Naive thymus-derived CD8-positive, alpha-beta T cell (primary cell): ENCODE measurements at regions of chr6 and their contacts with region 1.

Region 1: DNA sequence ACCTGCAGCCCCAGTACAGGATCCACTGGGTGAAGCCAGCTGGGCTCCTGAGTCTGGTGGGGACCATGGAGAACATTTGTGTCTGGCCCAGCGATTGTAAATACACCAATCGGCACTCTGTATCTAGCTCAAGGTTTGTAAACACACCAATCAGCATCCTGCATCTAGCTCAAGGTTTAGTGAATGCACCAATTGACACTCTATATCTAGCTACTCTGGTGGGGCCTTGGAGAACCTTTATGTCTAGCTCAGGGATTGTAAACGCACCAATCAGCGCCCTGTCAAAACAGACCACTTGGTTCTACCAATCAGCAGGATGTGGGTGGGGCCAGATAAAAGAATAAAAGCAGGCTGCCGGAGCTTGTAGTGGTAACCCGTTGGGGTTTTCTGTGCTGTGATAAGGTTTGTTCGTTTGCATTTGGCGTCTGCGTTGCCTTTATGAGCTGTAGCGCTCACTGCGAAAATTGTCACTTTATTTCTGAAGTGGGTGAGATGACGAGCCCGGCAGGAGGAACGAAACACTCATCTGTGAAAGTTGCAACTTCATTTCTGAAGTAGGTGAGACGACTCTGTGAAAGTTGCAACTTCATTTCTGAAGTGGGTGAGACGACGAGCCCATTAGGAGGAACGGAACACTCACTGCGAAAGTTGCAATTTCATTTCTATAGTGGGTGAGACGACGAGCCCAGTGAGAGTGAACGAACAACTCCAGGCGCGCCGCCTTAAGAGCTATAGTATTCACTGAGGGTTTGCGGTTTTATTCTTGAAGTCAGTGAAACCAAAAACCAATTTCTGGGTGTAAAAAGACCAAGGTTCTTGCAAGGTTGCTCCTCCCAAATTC is 31.1 kb downstream of the SERPINB6 start:
- DNase-seq: peak; percentile 31 to 90 (median 77)
- ATAC-seq: peak; percentile 67 to 68
- H3K4me3 Mint-ChIP-seq: peak overlapping the region; percentile 77 to 94 (median 85)
- H3K27ac Mint-ChIP-seq: peak overlapping the region; percentile 84 to 99 (median 94)
- H3K4me1 Mint-ChIP-seq: peaks cover 38 to 82% (median 69%) of the 10 kb centered on the region in 4 donors
- H3K27me3 Mint-ChIP-seq: no peaks in the 10 kb centered on the region

Region 2: GRCh38 chr6:2634139-2634964 is 305.9 kb before region 1 on chr6:
- POLR2A ChIA-PET with region 1: no interaction called
- DNase-seq: peak; percentile 57 to 89 (median 82)
- ATAC-seq: peak; percentile 98 to 99
- H3K4me3 Mint-ChIP-seq: peak overlapping the region; percentile 63 to 88 (median 77)
- H3K27ac Mint-ChIP-seq: peak overlapping the region in 6 of 10 donors; percentile 29 to 79 (median 58)
- H3K4me1 Mint-ChIP-seq: peaks cover 2 to 10% (median 6%) of the 10 kb centered on the region in 4 donors
- H3K27me3 Mint-ChIP-seq: peaks cover 2 to 29% (median 16%) of the 10 kb centered on the region in 5 donors

Region 3: GRCh38 chr6:2848851-2849250 is 91.4 kb before region 1 on chr6:
- POLR2A ChIA-PET with region 1: interaction called, 35 read pairs
- DNase-seq: peak; percentile 36 to 88 (median 68)
- ATAC-seq: peak; percentile 87 to 97
- H3K4me3 Mint-ChIP-seq: peak overlapping the region in 9 of 10 donors; percentile 16 to 77 (median 69)
- H3K27ac Mint-ChIP-seq: peak overlapping the region; percentile 61 to 98 (median 95)
- H3K4me1 Mint-ChIP-seq: peaks cover 20 to 52% (median 44%) of the 10 kb centered on the region in 4 donors
- H3K27me3 Mint-ChIP-seq: no peaks in the 10 kb centered on the region

Region 4: GRCh38 chr6:2900821-2901644 is 39.2 kb before region 1 on chr6:
- POLR2A ChIA-PET with region 1: interaction called, 10 read pairs
- DNase-seq: peak in 1 of 10 donors; percentile 12
- ATAC-seq: no peak
- H3K4me3 Mint-ChIP-seq: peak overlapping the region; percentile 97 to 100 (median 100)
- H3K27ac Mint-ChIP-seq: peak overlapping the region; percentile 91 to 98 (median 98)
- H3K4me1 Mint-ChIP-seq: peaks cover 40 to 71% (median 62%) of the 10 kb centered on the region in 4 donors
- H3K27me3 Mint-ChIP-seq: no peaks in the 10 kb centered on the region

Region 5: GRCh38 chr6:2959909-2960719 is 19.9 kb after region 1 on chr6:
- POLR2A ChIA-PET with region 1: interaction called, 147 read pairs
- DNase-seq: no peak
- ATAC-seq: no peak
- H3K4me3 Mint-ChIP-seq: no peak overlapping the region
- H3K27ac Mint-ChIP-seq: peak overlapping the region in 6 of 10 donors; percentile 40 to 96 (median 71)
- H3K4me1 Mint-ChIP-seq: peaks cover 19 to 62% (median 33%) of the 10 kb centered on the region in 4 donors
- H3K27me3 Mint-ChIP-seq: peaks cover 0 to 1% (median 0%) of the 10 kb centered on the region in 5 donors

Region 6: DNA sequence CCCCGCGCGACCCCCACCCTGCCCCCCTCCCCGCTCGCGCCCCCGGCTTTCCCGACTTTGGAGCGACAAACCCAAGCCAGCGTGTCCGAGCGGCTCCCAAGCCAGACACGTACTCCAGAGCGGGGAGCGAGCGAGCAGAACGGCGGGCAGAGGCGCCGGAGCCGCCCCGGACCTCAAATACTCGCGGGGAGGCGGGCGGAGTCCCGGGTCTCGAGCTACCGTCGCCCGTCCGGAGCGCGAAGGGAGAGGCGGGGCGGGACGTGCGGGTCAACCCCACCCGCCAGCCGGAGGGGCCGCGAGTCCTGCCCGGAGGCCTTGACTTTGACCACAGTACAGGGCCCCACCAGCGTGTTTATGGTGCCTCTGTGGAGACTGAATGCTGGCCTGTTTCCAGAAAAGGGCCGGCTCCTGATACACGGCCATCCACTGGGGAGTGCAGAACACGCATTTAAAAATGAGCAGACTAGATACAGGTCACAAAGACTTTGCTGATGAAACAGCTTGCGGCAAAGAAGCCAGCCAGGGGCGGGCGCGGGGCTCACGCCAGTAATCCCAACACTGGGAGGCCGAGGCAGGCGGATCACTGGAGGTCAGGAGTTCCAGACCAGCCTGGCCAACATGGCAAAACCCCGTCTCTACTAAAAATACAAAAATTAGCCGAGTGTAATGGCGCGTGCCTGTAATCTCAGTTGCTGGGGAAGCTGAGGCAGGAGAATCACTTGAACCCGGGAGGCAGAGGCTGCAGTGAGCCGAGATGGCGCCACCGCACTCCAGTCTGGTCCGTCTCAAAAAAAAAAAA is 31.4 kb after region 1 on chr6 and contains the start of gene SERPINB6:
- POLR2A ChIA-PET with region 1: interaction called, 60 read pairs
- DNase-seq: peak; percentile 17 to 75 (median 40)
- ATAC-seq: peak; percentile 69 to 74
- H3K4me3 Mint-ChIP-seq: peak within 1 kb of the TSS; percentile 84 to 94 (median 92)
- H3K27ac Mint-ChIP-seq: peak within 1 kb of the TSS; percentile 87 to 97 (median 94)
- H3K4me1 Mint-ChIP-seq: peaks cover 24 to 60% (median 43%) of the 10 kb centered on the region in 4 donors
- H3K27me3 Mint-ChIP-seq: peaks cover 0 to 10% (median 0%) of the 10 kb centered on the region in 5 donors
- polyA plus RNA-seq, gene SERPINB6: 128 to 152 (median 141) TPM

Region 7: GRCh38 chr6:3094815-3095214 is 154.6 kb after region 1 on chr6:
- POLR2A ChIA-PET with region 1: no interaction called
- DNase-seq: no peak
- ATAC-seq: no peak
- H3K4me3 Mint-ChIP-seq: no peak overlapping the region
- H3K27ac Mint-ChIP-seq: peak overlapping the region in 3 of 10 donors; percentile 19 to 72 (median 56)
- H3K4me1 Mint-ChIP-seq: peaks cover 0 to 6% (median 3%) of the 10 kb centered on the region in 4 donors
- H3K27me3 Mint-ChIP-seq: no peaks in the 10 kb centered on the region